ENCODE measurements at regions of chr2 and their contacts with region 1.

Region 1: GRCh38 chr2:17851731-17852585 is 26.5 kb upstream of the KCNS3 start:
- DNase-seq: peak in 4 of 5 donors; percentile 33 to 58 (median 47)
- ATAC-seq: peak; percentile 49 to 84 (median 73)
- H3K4me3 ChIP-seq: no peak overlapping the region
- H3K27ac ChIP-seq: no peak overlapping the region
- H3K4me1 ChIP-seq: peaks cover 0 to 6% (median 0%) of the 10 kb centered on the region in 12 donors
- H3K27me3 ChIP-seq: peaks cover 0 to 5% (median 0%) of the 10 kb centered on the region in 9 donors
- CTCF ChIP-seq: peak; percentile 72 to 90 (median 88)
- POLR2A ChIP-seq: no peak

Region 2: GRCh38 chr2:17918789-17919188 is 66.8 kb after region 1 on chr2:
- intact Hi-C with region 1: no loop called
- DNase-seq: no peak
- ATAC-seq: no peak
- H3K4me3 ChIP-seq: no peak overlapping the region
- H3K27ac ChIP-seq: no peak overlapping the region
- H3K4me1 ChIP-seq: peaks cover 0 to 19% (median 0%) of the 10 kb centered on the region in 12 donors
- H3K27me3 ChIP-seq: no peaks in the 10 kb centered on the region
- CTCF ChIP-seq: peak in 4 of 12 donors; percentile 13 to 42 (median 24)
- POLR2A ChIP-seq: no peak

Region 3: GRCh38 chr2:18149645-18150246 is 297.8 kb after region 1 on chr2:
- intact Hi-C with region 1: loop called in 9 of 10 experiments (anchors 1 to 5 kb)
- DNase-seq: no peak
- ATAC-seq: peak in 1 of 4 donors; percentile 41
- H3K4me3 ChIP-seq: no peak overlapping the region
- H3K27ac ChIP-seq: no peak overlapping the region
- H3K4me1 ChIP-seq: no peaks in the 10 kb centered on the region
- H3K27me3 ChIP-seq: no peaks in the 10 kb centered on the region
- CTCF ChIP-seq: peak; percentile 59 to 88 (median 73)
- POLR2A ChIP-seq: no peak

Region 4: DNA sequence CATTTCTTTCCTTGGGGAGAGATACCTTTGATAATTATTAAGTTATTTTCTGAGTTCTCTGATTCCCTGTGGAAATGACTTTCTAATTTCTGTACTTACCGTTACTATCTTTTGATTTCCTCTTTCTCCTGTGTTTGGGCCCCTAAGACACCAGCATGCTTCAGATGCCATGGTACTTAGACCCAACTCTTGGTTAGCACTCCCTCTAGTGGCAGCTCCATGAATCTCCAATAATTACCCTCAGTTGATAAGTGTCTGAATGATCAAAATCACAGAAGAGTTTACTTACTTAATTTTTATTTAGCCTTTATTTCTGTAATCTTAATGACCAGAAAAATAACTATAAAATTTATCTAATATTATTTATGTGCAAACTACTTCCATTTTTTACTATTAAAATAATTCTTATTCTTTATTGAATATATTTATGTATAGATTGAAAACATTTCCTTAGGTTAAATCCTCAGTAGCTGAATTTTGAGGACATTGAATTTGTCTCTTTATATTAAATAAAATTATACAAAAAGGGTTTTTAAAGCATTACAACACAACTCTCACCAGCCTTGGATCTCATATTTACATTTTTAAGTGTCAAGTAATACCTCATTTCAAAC is 326.9 kb after region 1 on chr2:
- intact Hi-C with region 1: loop called in 5 of 10 experiments (anchors 2 to 10 kb)
- DNase-seq: no peak
- ATAC-seq: peak in 1 of 4 donors; percentile 80
- H3K4me3 ChIP-seq: no peak overlapping the region
- H3K27ac ChIP-seq: no peak overlapping the region
- H3K4me1 ChIP-seq: peaks cover 0 to 6% (median 0%) of the 10 kb centered on the region in 12 donors
- H3K27me3 ChIP-seq: no peaks in the 10 kb centered on the region
- CTCF ChIP-seq: peak; percentile 60 to 86 (median 78)
- POLR2A ChIP-seq: no peak